Activated CD4-positive, alpha-beta memory T cell treated with anti-CD3 and anti-CD28 coated beads for 36 hours (primary cell): ENCODE measurements at regions of chr20 and their contacts with region 1.

Region 1: GRCh38 chr20:52305858-52306257 is 114.3 kb upstream of the ZFP64 start:
- DNase-seq: peak; percentile 60
- H3K4me3 Mint-ChIP-seq: peak overlapping the region; percentile 13
- H3K27ac Mint-ChIP-seq: peak overlapping the region; percentile 50
- H3K4me1 Mint-ChIP-seq: peaks cover 51% of the 10 kb centered on the region
- H3K27me3 Mint-ChIP-seq: no peaks in the 10 kb centered on the region

Region 2: DNA sequence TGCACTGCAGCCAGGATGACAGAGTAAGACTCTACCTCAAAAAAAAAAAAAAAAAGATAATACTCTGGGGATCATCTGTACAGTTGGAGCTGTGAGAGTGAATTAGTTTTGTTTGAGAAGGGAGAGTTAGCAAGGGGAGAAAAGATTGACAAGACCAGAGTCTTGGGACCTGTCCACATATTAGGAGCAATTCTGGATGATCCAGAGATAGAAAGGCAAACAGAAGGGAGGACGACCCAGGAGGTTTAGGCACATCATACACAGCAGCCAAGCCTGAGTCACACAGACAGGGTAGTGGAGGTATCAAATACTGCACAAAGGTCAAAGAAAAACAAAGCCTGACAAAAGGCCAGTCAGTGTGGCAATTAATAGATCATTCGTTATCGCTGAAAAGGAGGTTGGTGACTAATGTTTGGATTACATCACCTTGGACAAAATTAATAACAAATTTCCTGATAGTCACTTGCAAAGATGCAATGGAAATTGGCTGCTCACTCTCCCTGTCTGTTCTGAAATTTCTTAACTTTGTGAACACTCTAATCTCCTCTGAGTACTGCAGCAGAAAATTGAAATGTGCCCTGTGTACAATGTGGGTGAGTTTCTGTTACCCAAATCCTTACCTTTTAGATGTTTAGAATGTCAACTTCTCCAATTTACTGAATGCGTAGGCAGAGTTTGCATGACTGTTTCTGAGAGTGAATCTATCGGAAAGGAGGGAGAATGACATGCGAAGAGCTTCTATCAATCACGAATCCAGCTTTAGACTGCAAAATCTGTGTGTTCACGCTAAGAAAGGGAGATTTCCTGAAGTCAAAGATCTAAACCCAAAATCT is 771.7 kb after region 1 on chr20:
- CTCF ChIA-PET with region 1: no interaction called
- POLR2A ChIA-PET with region 1: no interaction called
- intact Hi-C with region 1: loop called (anchors 10 kb)
- DNase-seq: peak; percentile 51
- H3K4me3 Mint-ChIP-seq: no peak overlapping the region
- H3K27ac Mint-ChIP-seq: no peak overlapping the region
- H3K4me1 Mint-ChIP-seq: peaks cover 47% of the 10 kb centered on the region
- H3K27me3 Mint-ChIP-seq: no peaks in the 10 kb centered on the region

Region 3: DNA sequence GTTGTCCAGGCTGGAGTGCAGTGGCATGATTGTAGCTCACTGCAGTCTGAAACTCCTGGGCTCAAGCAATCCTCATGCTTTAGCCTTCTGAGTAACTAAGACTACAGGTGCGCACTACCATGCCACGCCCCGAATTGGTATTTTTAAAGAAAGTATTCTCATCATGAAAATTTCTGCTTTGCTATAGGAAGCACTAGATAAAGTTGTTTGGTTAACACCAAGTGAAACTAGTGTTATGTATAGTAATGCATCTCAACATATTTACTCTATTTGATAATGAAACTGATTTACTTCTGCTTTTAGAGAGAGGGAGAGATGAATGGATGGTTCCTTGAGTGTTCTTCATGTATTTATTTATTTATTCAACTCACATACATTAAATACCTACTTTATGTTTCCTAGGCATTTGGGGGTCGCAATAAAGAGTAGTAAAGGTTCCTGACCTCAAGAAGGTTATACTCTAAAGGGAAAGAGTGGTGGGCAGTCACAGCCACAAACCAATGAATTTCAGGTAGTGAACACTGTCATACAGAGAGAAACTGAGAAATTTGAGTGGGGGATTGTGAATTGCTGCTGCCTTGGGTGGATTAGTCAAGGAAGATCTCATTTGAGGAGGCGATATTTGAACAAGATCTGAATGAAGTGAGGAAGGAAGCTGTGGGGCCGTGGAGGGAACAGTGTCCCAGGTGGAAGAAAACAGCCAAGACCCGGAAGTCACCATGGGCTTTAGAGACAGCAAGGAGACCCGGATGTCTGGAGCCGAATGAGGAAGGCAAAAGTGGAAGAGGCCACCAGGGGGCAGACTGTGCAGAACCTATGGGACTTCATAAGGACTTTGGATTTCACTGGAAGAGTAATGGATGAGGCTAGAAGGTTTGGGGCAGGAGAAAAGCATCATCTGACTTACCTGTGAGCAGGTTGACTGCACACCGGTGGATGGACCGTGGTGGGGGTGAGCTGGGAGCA is 851.9 kb after region 1 on chr20:
- CTCF ChIA-PET with region 1: no interaction called
- POLR2A ChIA-PET with region 1: no interaction called
- intact Hi-C with region 1: loop called (anchors 10 kb)
- DNase-seq: peak; percentile 49
- H3K4me3 Mint-ChIP-seq: no peak overlapping the region
- H3K27ac Mint-ChIP-seq: peak overlapping the region; percentile 3
- H3K4me1 Mint-ChIP-seq: peaks cover 51% of the 10 kb centered on the region
- H3K27me3 Mint-ChIP-seq: no peaks in the 10 kb centered on the region